ENCODE measurements at regions of chr7 and their contacts with region 1.

Region 1: GRCh38 chr7:102272075-102272917 is 14.4 kb upstream of the SH2B2 start:
- DNase-seq: peak; percentile 93
- H3K4me3 ChIP-seq: no peak overlapping the region
- H3K27ac ChIP-seq: no peak overlapping the region
- H3K4me1 ChIP-seq: peaks cover 0 to 8% (median 3%) of the 10 kb centered on the region in 6 donors
- H3K27me3 ChIP-seq: no peaks in the 10 kb centered on the region
- CTCF ChIP-seq: peak; percentile 77 to 95 (median 92)
- POLR2A ChIP-seq: no peak

Region 2: DNA sequence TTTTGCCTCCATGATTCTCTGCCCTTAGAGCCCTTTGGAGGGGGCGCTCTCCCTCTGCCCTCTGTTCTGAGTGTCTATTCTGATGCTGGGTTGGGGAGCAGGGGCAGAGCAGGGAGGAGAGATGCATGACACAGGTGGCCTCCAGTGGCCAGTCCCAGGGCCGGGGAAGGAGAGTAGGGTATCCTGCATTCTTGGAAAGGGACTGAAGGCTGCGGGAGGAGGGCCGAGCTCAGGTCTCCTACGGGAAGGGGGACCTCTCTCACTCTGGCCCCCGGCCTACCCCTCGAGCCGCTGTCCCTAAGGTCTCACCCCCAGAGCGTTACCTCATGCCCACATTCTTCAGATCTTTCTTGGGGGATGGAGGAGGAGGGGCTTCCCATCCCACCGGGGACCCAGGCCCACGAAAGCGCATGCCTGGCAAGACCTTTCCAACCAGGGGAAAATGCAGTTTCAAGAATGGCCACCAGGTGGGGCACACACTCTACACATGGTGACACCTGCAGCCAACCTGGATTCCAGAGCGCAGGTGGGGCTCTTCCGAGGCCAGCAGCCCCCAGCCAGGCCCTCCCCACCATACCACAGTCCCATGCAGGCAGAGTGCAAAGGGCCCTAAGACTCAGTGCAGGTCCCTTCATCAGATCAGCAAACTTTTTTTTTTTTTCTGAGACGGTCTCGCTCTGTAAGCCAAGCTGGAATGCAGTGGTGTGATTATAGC is 729.6 kb before region 1 on chr7:
- intact Hi-C with region 1: loop called (anchors 2 kb)
- DNase-seq: peak; percentile 85
- H3K4me3 ChIP-seq: no peak overlapping the region
- H3K27ac ChIP-seq: no peak overlapping the region
- H3K4me1 ChIP-seq: peaks cover 0 to 12% (median 6%) of the 10 kb centered on the region in 6 donors
- H3K27me3 ChIP-seq: peaks cover 0 to 7% (median 0%) of the 10 kb centered on the region in 7 donors
- CTCF ChIP-seq: peak; percentile 76 to 90 (median 89)
- POLR2A ChIP-seq: no peak